Breast epithelium (tissue), 4 donors: ENCODE measurements at regions of chr15 and their contacts with region 1.

Region 1: DNA sequence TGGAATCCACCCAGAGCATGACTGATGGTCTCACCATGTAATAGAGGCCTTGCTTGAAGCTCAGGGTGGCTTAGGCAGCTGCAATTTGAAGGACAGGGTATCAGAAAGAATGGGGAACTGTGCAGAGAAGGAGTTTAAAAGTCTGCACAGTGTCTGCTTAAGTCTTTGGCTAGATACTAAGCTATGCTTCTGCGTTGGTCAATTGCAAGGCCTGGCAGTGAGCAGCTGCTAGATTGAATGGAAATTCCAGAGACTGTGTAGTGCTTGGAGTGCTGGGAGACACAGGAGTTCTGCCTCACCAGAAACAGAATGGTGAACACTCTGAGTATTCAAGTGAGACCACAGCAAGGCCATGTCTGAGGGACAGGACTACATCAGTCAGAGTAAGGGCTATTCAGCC is 17.3 kb upstream of the ATP10A start:
- DNase-seq: no peak
- H3K4me3 ChIP-seq: no peak overlapping the region
- H3K27ac ChIP-seq: no peak overlapping the region
- H3K4me1 ChIP-seq: no peaks in the 10 kb centered on the region
- H3K27me3 ChIP-seq: no peaks in the 10 kb centered on the region
- CTCF ChIP-seq: no peak
- POLR2A ChIP-seq: no peak

Region 2: GRCh38 chr15:25811481-25811906 is 68.9 kb before region 1 on chr15:
- intact Hi-C with region 1: loop called (anchors 2 kb)
- DNase-seq: no peak
- H3K4me3 ChIP-seq: no peak overlapping the region
- H3K27ac ChIP-seq: peak overlapping the region in 1 of 2 donors; percentile 69
- H3K4me1 ChIP-seq: no peaks in the 10 kb centered on the region
- H3K27me3 ChIP-seq: no peaks in the 10 kb centered on the region
- CTCF ChIP-seq: no peak
- POLR2A ChIP-seq: no peak

Region 3: DNA sequence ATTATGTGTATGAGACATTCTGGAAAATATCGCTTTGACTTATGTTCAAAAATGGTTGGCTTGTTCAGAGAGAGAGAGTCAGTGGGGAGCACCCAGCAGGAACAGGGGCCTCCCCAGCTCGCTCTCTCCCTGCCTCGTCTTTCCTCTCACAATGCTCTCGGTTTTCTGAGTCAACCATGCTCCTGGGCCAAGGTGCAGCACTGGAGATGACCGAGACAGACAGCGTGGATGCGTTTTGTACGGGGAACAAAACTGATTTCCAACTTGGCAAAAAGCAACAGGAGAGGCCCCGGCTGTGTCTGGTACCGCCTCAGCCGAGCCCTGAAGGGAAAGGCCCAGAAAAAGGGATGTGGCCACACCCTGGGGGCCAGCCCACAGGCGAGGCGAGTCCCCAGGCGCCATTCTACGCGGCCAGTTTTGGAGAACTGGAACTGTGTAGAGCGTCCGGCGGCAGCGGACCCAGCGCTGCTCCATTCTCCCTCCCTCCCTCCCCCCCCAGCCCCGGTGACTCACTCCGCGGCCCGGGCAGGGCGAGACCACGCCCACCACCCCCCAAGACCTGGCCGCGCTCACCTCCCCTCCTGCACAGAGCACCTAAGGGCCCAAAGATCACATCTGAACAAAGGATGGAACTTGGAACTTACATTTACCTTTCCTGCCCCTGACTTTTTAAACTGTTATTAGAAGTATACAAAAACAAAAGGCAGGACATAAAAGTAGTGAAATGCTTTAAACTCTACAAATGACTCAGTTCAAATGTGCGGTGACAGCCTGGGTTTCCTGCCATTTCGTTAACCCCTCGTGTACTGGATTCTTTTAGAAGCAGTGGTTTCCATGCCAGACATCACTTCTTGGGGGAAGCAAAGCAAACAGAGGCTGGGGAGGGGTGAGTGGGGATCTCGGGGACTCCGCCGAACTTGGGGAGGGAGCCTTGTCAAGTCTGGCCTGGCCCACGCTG is 30.0 kb before region 1 on chr15:
- intact Hi-C with region 1: no loop called
- DNase-seq: peak; percentile 69 to 76
- H3K4me3 ChIP-seq: peak overlapping the region; percentile 38 to 72 (median 56)
- H3K27ac ChIP-seq: peak overlapping the region; percentile 90 to 95
- H3K4me1 ChIP-seq: peaks cover 6 to 7% of the 10 kb centered on the region in 2 donors
- H3K27me3 ChIP-seq: no peaks in the 10 kb centered on the region
- CTCF ChIP-seq: no peak
- POLR2A ChIP-seq: no peak

Region 4: GRCh38 chr15:26065723-26066122 is 185.3 kb after region 1 on chr15:
- intact Hi-C with region 1: no loop called
- DNase-seq: no peak
- H3K4me3 ChIP-seq: no peak overlapping the region
- H3K27ac ChIP-seq: no peak overlapping the region
- H3K4me1 ChIP-seq: no peaks in the 10 kb centered on the region
- H3K27me3 ChIP-seq: no peaks in the 10 kb centered on the region
- CTCF ChIP-seq: no peak
- POLR2A ChIP-seq: no peak